WTC11 (cell line): ENCODE measurements at regions of chr2 and their contacts with region 1.

Region 1: GRCh38 chr2:113138428-113139322 is 11.3 kb downstream of the IL1RN start:
- DNase-seq: no peak
- ATAC-seq: peak; percentile 65
- H3K4me3 Mint-ChIP-seq: no peak overlapping the region
- H3K27ac Mint-ChIP-seq: no peak overlapping the region
- H3K4me1 Mint-ChIP-seq: no peaks in the 10 kb centered on the region
- H3K27me3 Mint-ChIP-seq: no peaks in the 10 kb centered on the region
- CTCF ChIP-seq: peak; percentile 68

Region 2: GRCh38 chr2:112891385-112891831 is 247.3 kb before region 1 on chr2:
- CTCF ChIA-PET with region 1: no interaction called
- POLR2A ChIA-PET with region 1: no interaction called
- DNase-seq: no peak
- ATAC-seq: no peak
- H3K4me3 Mint-ChIP-seq: no peak overlapping the region
- H3K27ac Mint-ChIP-seq: no peak overlapping the region
- H3K4me1 Mint-ChIP-seq: no peaks in the 10 kb centered on the region
- H3K27me3 Mint-ChIP-seq: peaks cover 5% of the 10 kb centered on the region
- CTCF ChIP-seq: no peak

Region 3: DNA sequence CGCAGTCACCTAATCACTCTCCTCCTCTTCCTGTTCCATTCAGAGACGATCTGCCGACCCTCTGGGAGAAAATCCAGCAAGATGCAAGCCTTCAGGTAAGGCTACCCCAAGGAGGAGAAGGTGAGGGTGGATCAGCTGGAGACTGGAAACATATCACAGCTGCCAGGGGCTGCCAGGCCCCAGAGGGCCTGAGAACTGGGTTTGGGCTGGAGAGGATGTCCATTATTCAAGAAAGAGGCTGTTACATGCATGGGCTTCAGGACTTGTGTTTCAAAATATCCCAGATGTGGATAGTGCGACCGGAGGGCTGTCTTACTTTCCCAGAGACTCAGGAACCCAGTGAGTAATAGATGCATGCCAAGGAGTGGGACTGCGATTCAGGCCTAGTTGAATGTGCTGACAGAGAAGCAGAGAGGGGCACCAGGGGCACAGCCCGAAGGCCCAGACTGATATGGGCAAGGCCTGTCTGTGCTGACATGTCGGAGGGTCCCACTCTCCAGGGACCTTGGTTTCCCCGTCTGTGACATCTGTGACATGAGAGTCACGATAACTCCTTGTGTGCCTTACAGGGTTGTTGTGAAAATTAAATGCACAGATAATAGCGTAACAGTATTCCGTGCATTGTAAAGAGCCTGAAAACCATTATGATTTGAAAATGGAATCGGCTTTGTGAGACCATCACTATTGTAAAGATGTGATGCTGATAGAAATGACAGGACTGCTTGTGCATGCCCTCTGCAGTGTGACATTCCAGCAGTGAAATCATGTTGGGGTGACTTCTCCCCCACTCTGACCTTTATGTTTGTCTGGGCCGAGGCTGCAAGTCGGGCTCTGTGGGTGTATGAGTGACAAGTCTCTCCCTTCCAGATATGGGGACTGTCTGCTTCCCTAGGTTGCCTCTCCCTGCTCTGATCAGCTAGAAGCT is 10.8 kb before region 1 on chr2:
- CTCF ChIA-PET with region 1: interaction called, 11 read pairs
- POLR2A ChIA-PET with region 1: no interaction called
- DNase-seq: no peak
- ATAC-seq: no peak
- H3K4me3 Mint-ChIP-seq: no peak overlapping the region
- H3K27ac Mint-ChIP-seq: no peak overlapping the region
- H3K4me1 Mint-ChIP-seq: no peaks in the 10 kb centered on the region
- H3K27me3 Mint-ChIP-seq: no peaks in the 10 kb centered on the region
- CTCF ChIP-seq: no peak

Region 4: DNA sequence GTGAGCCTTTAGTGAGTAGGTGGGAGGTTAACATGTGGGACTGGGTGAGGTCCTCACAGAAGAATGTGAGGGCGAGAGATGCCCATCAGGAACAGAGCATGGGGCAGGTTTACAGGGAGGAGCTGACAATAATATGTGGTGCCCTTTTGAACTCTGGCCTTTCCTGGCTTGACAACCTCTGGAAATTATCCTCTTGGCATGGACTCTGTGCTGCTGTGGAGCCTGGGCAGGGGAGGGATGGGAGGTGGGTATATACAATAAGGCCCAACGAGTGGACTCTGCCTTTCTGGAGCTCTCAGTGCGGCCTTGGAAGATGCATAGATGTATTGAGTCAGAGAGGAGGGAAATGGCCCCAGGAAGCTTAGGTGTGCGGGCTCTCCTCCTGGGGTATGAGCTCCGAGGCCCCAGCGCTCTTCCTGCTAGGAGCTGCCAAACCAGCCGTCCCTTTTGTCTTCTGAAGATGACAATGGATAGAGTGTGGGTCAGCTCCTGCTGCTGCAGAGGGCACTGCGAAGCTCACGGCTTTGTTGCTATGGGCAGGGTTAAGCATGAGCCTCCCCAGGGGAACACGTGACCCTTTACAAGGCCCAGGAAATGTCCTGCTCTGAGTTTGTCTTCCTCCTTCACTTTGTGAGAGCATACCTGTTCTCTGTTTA is 26.4 kb after region 1 on chr2:
- CTCF ChIA-PET with region 1: interaction called, 15 read pairs
- POLR2A ChIA-PET with region 1: no interaction called
- DNase-seq: no peak
- ATAC-seq: peak; percentile 80
- H3K4me3 Mint-ChIP-seq: no peak overlapping the region
- H3K27ac Mint-ChIP-seq: no peak overlapping the region
- H3K4me1 Mint-ChIP-seq: peaks cover 12% of the 10 kb centered on the region
- H3K27me3 Mint-ChIP-seq: peaks cover 7% of the 10 kb centered on the region; the same call in 1 of the 2 replicates
- CTCF ChIP-seq: no peak

Region 5: DNA sequence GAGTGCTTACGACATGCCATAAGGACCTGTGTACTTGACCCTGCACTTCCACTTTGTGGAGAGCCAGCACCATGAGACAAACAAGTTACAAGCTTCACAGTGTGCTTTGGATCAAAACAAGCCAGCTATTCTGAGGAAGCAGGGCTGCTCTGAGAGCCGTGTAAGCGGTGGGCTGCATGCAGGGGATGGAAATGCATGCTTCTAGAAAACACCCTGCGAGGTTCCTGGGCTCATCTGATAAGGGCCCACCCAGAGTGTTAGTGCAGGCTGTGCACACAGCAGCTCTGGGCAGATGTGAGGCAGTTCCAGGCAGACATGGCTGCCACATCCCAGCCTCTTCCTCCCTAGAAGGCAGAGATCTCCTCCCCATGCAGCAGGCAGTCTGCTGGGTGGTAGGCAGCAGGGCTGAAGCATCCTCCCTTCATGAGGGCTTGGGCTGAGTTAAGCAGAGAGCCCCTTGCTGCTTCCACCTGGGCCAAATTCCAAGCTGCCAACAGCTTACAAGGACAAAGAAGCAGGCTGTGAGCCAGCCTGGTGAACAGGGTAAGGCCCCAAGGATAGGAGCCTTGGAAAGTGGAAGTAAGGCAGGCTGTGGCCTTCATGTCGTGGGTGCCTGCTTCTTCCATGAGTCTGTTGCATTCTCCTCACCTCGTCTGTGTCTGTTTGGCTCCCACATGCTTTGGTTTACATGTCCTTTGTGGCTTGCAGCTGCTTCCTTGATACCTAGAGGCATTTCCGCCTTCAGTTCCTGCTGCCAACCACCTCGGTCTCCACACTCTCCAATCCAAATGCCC is 42.8 kb after region 1 on chr2:
- CTCF ChIA-PET with region 1: interaction called, 42 read pairs
- POLR2A ChIA-PET with region 1: no interaction called
- DNase-seq: no peak
- ATAC-seq: no peak
- H3K4me3 Mint-ChIP-seq: no peak overlapping the region
- H3K27ac Mint-ChIP-seq: no peak overlapping the region
- H3K4me1 Mint-ChIP-seq: peaks cover 13% of the 10 kb centered on the region
- H3K27me3 Mint-ChIP-seq: no peaks in the 10 kb centered on the region; the same call in 1 of the 2 replicates
- CTCF ChIP-seq: no peak